ENCODE measurements at regions of chr13 and their contacts with region 1.

Region 1: DNA sequence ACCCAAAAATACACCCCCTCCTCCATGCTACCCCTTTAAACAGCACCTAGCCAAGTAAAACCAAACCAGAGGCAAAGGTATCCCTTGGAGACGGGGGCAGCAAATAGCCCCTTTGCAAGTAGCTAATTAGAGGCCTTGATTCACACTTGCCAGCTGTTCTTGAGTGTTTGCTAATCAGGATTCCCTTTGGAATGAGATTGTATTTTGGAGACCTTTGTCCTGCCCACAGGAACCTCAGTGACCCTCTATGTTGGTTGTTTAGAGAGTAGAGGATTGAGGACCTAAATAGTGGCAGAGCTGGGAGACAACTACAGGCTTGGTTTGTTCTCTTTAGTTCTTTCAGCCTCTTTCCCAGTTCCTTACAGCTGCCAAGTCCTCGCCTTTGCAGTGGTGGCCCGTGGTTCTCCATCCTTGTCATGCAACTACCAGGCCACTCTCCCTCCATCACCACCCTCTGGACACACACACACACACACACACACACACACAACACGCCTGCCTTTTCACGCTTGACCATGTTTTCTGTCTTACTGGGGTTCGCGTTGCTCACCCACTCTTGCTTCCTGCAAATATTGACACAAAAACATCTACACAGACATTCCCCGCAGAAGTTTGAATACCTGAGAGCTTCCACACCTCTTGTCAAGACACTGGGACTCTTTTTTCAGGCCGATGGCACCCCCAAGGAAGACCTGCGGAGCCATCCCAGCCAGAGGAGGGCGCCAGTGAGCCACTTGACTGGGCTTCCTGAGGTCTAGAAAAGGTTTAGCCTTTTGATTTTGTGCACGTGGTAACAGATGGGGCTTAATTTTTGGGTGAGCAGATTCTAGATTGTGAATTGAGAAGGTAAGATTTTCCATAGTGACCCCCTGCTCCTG is 80.0 kb upstream of the GPR183 start:
- DNase-seq: peak; percentile 89
- ATAC-seq: peak; percentile 68
- H3K4me3 ChIP-seq: no peak overlapping the region
- H3K4me3 Mint-ChIP-seq: peak overlapping the region; percentile 58
- H3K27ac ChIP-seq: peak overlapping the region; percentile 8 to 69
- H3K27ac Mint-ChIP-seq: peak overlapping the region; percentile 91
- H3K4me1 ChIP-seq: peaks cover 35 to 44% of the 10 kb centered on the region in 2 donors
- H3K4me1 Mint-ChIP-seq: peaks cover 46% of the 10 kb centered on the region
- H3K27me3 ChIP-seq: no peaks in the 10 kb centered on the region
- H3K27me3 Mint-ChIP-seq: no peaks in the 10 kb centered on the region
- CTCF ChIP-seq: peak; percentile 88

Region 2: GRCh38 chr13:99296398-99296797 is 90.8 kb before region 1 on chr13:
- CTCF ChIA-PET with region 1: interaction called, 39 read pairs
- POLR2A ChIA-PET with region 1: interaction called, 4 read pairs
- intact Hi-C with region 1: no loop called
- DNase-seq: peak; percentile 45
- ATAC-seq: no peak
- H3K4me3 ChIP-seq: peak overlapping the region in 3 of 5 experiments; percentile 2 to 47 (median 17)
- H3K4me3 Mint-ChIP-seq: peak overlapping the region; percentile 72
- H3K27ac ChIP-seq: peak overlapping the region; percentile 32 to 78
- H3K27ac Mint-ChIP-seq: peak overlapping the region; percentile 59
- H3K4me1 ChIP-seq: peaks cover 73 to 81% of the 10 kb centered on the region in 2 donors
- H3K4me1 Mint-ChIP-seq: peaks cover 82% of the 10 kb centered on the region
- H3K27me3 ChIP-seq: no peaks in the 10 kb centered on the region
- H3K27me3 Mint-ChIP-seq: no peaks in the 10 kb centered on the region
- CTCF ChIP-seq: no peak

Region 3: DNA sequence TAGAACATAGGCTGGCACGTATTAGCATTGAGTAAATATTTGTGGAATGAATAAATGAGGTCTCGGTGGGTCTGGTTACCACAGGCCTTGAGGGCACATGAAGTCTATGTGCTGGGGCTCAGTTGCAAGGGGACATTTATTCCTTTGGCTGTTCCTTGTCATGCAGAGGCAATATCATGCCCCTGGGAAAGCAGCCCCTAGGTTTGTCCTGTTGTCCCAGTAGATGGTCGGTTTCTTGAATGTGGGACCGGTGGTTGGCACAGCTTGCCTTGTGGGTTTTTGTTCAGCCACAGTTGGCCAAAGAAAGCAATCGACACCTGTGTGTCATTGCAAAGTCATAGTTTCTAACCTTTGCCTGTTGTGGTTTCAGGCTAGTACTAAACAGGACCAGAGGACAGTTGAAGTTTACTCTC is 55.3 kb before region 1 on chr13:
- CTCF ChIA-PET with region 1: interaction called, 11 read pairs
- POLR2A ChIA-PET with region 1: no interaction called
- intact Hi-C with region 1: no loop called
- DNase-seq: no peak
- ATAC-seq: no peak
- H3K4me3 ChIP-seq: no peak overlapping the region
- H3K4me3 Mint-ChIP-seq: no peak overlapping the region
- H3K27ac ChIP-seq: no peak overlapping the region
- H3K27ac Mint-ChIP-seq: no peak overlapping the region
- H3K4me1 ChIP-seq: peaks cover 13 to 24% of the 10 kb centered on the region in 2 donors
- H3K4me1 Mint-ChIP-seq: peaks cover 44% of the 10 kb centered on the region
- H3K27me3 ChIP-seq: no peaks in the 10 kb centered on the region
- H3K27me3 Mint-ChIP-seq: no peaks in the 10 kb centered on the region
- CTCF ChIP-seq: no peak

Region 4: GRCh38 chr13:99356158-99357091 is 30.7 kb before region 1 on chr13:
- CTCF ChIA-PET with region 1: interaction called, 17 read pairs
- POLR2A ChIA-PET with region 1: interaction called, 3 read pairs
- intact Hi-C with region 1: loop called (anchors 5 kb)
- DNase-seq: peak; percentile 91
- ATAC-seq: peak; percentile 60
- H3K4me3 ChIP-seq: peak overlapping the region in 4 of 5 experiments; percentile 13 to 47 (median 28)
- H3K4me3 Mint-ChIP-seq: peak overlapping the region; percentile 78
- H3K27ac ChIP-seq: peak overlapping the region; percentile 95 to 97
- H3K27ac Mint-ChIP-seq: peak overlapping the region; percentile 98
- H3K4me1 ChIP-seq: peaks cover 73 to 92% of the 10 kb centered on the region in 2 donors
- H3K4me1 Mint-ChIP-seq: peaks cover 96% of the 10 kb centered on the region
- H3K27me3 ChIP-seq: no peaks in the 10 kb centered on the region
- H3K27me3 Mint-ChIP-seq: no peaks in the 10 kb centered on the region
- CTCF ChIP-seq: no peak

Region 5: GRCh38 chr13:99425485-99426341 is 38.6 kb after region 1 on chr13:
- CTCF ChIA-PET with region 1: interaction called, 31 read pairs
- POLR2A ChIA-PET with region 1: interaction called, 10 read pairs
- intact Hi-C with region 1: no loop called
- DNase-seq: peak; percentile 80
- ATAC-seq: peak; percentile 59
- H3K4me3 ChIP-seq: peak overlapping the region in 3 of 5 experiments; percentile 21 to 58 (median 41)
- H3K4me3 Mint-ChIP-seq: peak overlapping the region; percentile 72
- H3K27ac ChIP-seq: peak overlapping the region; percentile 92 to 96
- H3K27ac Mint-ChIP-seq: peak overlapping the region; percentile 93
- H3K4me1 ChIP-seq: peaks cover 65 to 79% of the 10 kb centered on the region in 2 donors
- H3K4me1 Mint-ChIP-seq: peaks cover 71% of the 10 kb centered on the region
- H3K27me3 ChIP-seq: no peaks in the 10 kb centered on the region
- H3K27me3 Mint-ChIP-seq: no peaks in the 10 kb centered on the region
- CTCF ChIP-seq: no peak